K562 (cell line): ENCODE measurements at regions of chr12 and their contacts with region 1.

Region 1: GRCh38 chr12:53308276-53308675 is 8.8 kb downstream of the MYG1 start:
- DNase-seq: no peak
- ATAC-seq: no peak
- H3K4me3 ChIP-seq: no peak overlapping the region
- H3K27ac ChIP-seq: peak overlapping the region; percentile 70; the same call in 2 of the 3 replicates
- H3K4me1 ChIP-seq: peaks cover 14 to 17% of the 10 kb centered on the region in 2 experiments; a peak in 4 of 5 replicates
- H3K27me3 ChIP-seq: no peaks in the 10 kb centered on the region
- CTCF ChIP-seq: no peak
- EP300 ChIP-seq: no peak
- POLR2A ChIP-seq: no peak
- RAD21 ChIP-seq: no peak

Region 2: DNA sequence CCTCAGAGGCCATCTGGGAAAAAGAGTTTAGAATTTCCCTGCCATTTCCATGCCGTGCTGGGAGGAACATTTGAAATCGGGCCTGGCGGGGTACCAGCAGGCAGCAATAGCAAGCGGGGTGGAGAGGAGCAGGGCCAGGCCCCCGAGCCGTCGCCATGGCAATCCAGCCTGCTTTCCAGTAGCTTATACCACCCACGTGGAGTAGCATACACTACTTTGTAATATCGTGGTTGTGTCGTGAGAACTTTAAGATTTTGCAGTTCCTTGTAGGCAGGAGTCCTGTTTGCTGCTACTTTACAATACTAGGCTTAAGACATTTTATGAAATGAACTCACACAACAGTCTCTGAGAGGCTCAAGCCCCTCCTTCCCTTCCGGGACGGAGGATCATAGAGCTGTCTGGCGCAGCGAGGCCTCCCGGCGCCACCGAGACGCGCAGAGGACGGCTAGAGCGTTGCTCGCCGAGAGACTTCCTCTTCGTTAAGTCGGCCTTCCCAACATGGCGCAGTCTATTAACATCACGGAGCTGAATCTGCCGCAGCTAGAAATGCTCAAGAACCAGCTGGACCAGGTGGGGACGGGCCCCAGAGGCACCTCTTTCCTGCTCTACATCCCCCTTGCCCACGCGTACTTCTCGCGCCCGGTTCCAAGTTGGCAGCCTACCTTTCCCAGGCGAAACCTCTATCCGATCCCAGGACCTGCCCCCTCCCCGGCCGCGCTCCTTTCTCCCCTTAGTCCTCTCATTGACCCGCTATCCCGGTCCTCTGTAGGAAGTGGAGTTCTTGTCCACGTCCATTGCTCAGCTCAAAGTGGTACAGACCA is 13.0 kb before region 1 on chr12 and contains the start of gene PFDN5:
- CTCF ChIA-PET with region 1: no interaction called
- POLR2A ChIA-PET with region 1: interaction called, 12 read pairs
- in situ Hi-C with region 1: no loop called
- intact Hi-C with region 1: no loop called
- DNase-seq: peak; percentile 85 to 96 (median 88)
- ATAC-seq: peak; percentile 99
- H3K4me3 ChIP-seq: peak within 1 kb of the TSS; percentile 70
- H3K27ac ChIP-seq: peak within 1 kb of the TSS; percentile 88
- H3K4me1 ChIP-seq: peaks cover 23 to 28% of the 10 kb centered on the region in 2 experiments; a peak in 4 of 5 replicates
- H3K27me3 ChIP-seq: no peaks in the 10 kb centered on the region
- CTCF ChIP-seq: no peak
- EP300 ChIP-seq: peak; percentile 7; the same call in 1 of the 2 replicates
- POLR2A ChIP-seq: peak; percentile 92
- RAD21 ChIP-seq: peak in 1 of 2 experiments; percentile 17; a peak in 1 of 4 replicates
- polyA plus RNA-seq, gene PFDN5: 1,505 to 1,636 TPM